Aorta (tissue), 5 donors: ENCODE measurements at regions of chr9 and their contacts with region 1.

Region 1: GRCh38 chr9:38284588-38285051 is 107.9 kb upstream of the ALDH1B1 start:
- DNase-seq: no peak
- ATAC-seq: no peak
- H3K4me3 ChIP-seq: no peak overlapping the region
- H3K27ac ChIP-seq: no peak overlapping the region
- H3K4me1 ChIP-seq: no peaks in the 10 kb centered on the region
- H3K27me3 ChIP-seq: no peaks in the 10 kb centered on the region

Region 2: GRCh38 chr9:37812773-37813379 is 471.7 kb before region 1 on chr9:
- intact Hi-C with region 1: no loop called
- DNase-seq: no peak
- ATAC-seq: no peak
- H3K4me3 ChIP-seq: no peak overlapping the region
- H3K27ac ChIP-seq: no peak overlapping the region
- H3K4me1 ChIP-seq: peaks cover 0 to 1% of the 10 kb centered on the region in 2 donors
- H3K27me3 ChIP-seq: no peaks in the 10 kb centered on the region

Region 3: DNA sequence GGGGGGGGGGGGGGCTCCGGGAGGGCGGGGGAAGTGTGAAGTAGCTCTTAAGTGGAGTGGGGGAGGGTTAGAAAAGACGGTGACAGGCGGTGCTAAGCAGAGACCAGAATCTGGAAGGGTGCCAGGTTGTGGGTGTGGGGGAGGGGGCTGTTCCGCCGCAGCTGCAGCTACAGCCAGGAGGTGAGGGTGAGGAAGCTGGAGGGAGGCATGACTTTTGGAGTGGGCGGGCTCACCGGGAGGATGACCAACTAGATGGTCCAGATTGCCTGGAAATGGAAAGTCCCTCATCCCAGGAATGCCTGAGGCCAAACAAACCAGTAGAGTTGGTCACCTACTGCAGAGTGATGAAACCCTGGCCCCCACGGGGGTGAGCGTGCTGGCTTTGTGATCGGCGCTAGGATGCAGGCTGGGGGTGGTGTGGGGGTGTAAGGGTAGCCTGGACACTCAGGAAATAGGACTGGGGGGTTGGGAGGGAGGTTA is 57.5 kb before region 1 on chr9:
- intact Hi-C with region 1: no loop called
- DNase-seq: peak in 1 of 2 donors; percentile 53
- ATAC-seq: no peak
- H3K4me3 ChIP-seq: no peak overlapping the region
- H3K27ac ChIP-seq: no peak overlapping the region
- H3K4me1 ChIP-seq: no peaks in the 10 kb centered on the region
- H3K27me3 ChIP-seq: no peaks in the 10 kb centered on the region

Region 4: DNA sequence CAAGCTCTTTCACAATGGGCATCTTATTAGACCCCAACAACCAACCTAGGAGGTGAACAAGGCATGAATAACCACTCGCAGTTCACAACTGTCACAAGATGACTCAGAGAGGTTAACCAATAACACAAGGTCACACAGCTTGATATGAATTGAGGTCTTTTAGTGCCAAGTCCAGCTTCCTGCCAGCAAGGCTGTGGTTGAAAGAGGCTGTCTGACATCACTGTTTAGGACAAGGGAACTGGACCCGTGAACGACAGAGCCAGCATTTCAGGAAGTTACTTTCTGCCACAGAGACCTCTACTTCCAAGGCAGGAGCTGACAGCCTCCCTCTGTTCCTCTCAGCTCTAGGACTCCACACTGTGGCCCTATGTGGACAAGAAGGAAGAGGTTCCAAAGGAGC is 54.5 kb after region 1 on chr9:
- intact Hi-C with region 1: loop called in 1 of 2 experiments (anchors 10 kb)
- DNase-seq: peak in 1 of 2 donors; percentile 68
- ATAC-seq: no peak
- H3K4me3 ChIP-seq: no peak overlapping the region
- H3K27ac ChIP-seq: no peak overlapping the region
- H3K4me1 ChIP-seq: no peaks in the 10 kb centered on the region
- H3K27me3 ChIP-seq: no peaks in the 10 kb centered on the region

Region 5: GRCh38 chr9:38371495-38371894 is 86.9 kb after region 1 on chr9:
- intact Hi-C with region 1: no loop called
- DNase-seq: peak in 1 of 2 donors; percentile 51
- ATAC-seq: no peak
- H3K4me3 ChIP-seq: no peak overlapping the region
- H3K27ac ChIP-seq: no peak overlapping the region
- H3K4me1 ChIP-seq: no peaks in the 10 kb centered on the region
- H3K27me3 ChIP-seq: no peaks in the 10 kb centered on the region